Activated CD4-positive, alpha-beta T cell treated with anti-CD3 and anti-CD28 coated beads for 36 hours (primary cell): ENCODE measurements at regions of chr9 and their contacts with region 1.

Region 1: DNA sequence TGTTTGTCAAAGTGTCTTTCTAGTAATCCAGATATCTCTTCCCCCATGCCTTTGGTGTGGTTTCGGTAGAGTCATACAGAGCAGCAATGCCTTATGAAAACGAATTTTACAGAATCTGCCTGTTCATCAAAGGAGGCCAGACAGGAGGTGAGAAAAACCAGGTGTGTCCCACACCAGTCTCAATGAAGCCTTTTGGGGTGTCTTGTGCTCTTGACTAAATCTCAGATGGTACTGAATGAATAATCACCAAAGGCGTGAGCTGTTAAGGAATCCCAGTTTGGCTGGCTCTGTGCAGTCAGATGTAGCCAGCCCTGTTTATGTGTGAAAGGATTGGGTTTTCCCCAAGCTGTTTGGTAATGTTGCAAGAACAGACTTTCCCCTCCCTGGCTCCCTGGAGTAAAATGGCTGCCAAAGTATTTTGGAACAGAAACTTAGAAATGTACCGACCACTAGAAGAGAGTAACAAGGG is 70.8 kb upstream of the CDKN2B start:
- DNase-seq: peak; percentile 75
- ATAC-seq: peak; percentile 99
- H3K4me3 Mint-ChIP-seq: no peak overlapping the region
- H3K27ac Mint-ChIP-seq: no peak overlapping the region
- H3K4me1 Mint-ChIP-seq: peaks cover 26% of the 10 kb centered on the region
- H3K27me3 Mint-ChIP-seq: peaks cover 61% of the 10 kb centered on the region

Region 2: DNA sequence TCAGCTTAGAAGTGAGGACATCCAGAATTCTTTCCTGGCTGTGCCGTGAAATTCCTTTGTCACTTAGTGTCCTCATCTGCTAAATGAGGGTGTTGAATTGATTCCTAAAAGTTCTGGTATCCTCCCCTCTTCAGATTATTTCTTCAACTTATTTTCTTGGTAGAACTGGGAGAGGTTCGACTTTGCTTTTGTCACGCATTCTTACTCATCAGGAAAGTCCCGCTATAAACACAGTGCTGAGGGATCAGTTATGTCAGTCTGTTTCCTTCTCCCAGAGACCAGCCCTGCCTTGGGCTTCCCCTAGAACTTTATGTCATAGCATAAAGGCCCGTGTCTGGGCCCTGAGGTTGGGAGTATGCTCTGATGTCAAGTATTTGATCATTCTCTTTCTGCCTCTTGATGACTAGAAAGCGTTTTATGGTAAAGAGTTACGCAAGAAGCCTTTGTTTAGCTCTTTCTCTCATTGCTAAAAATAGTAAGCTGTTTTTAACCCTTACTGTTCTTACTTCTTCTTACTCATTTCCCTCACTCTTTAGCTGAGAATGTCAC is 247.9 kb before region 1 on chr9:
- CTCF ChIA-PET with region 1: no interaction called
- POLR2A ChIA-PET with region 1: no interaction called
- intact Hi-C with region 1: loop called (anchors 1 to 5 kb)
- DNase-seq: peak; percentile 77
- ATAC-seq: peak; percentile 91
- H3K4me3 Mint-ChIP-seq: no peak overlapping the region
- H3K27ac Mint-ChIP-seq: peak overlapping the region; percentile 83
- H3K4me1 Mint-ChIP-seq: peaks cover 64% of the 10 kb centered on the region
- H3K27me3 Mint-ChIP-seq: no peaks in the 10 kb centered on the region

Region 3: GRCh38 chr9:21862871-21863270 is 217.0 kb before region 1 on chr9:
- CTCF ChIA-PET with region 1: no interaction called
- POLR2A ChIA-PET with region 1: no interaction called
- intact Hi-C with region 1: no loop called
- DNase-seq: no peak
- ATAC-seq: no peak
- H3K4me3 Mint-ChIP-seq: no peak overlapping the region
- H3K27ac Mint-ChIP-seq: no peak overlapping the region
- H3K4me1 Mint-ChIP-seq: peaks cover 5% of the 10 kb centered on the region
- H3K27me3 Mint-ChIP-seq: no peaks in the 10 kb centered on the region

Region 4: DNA sequence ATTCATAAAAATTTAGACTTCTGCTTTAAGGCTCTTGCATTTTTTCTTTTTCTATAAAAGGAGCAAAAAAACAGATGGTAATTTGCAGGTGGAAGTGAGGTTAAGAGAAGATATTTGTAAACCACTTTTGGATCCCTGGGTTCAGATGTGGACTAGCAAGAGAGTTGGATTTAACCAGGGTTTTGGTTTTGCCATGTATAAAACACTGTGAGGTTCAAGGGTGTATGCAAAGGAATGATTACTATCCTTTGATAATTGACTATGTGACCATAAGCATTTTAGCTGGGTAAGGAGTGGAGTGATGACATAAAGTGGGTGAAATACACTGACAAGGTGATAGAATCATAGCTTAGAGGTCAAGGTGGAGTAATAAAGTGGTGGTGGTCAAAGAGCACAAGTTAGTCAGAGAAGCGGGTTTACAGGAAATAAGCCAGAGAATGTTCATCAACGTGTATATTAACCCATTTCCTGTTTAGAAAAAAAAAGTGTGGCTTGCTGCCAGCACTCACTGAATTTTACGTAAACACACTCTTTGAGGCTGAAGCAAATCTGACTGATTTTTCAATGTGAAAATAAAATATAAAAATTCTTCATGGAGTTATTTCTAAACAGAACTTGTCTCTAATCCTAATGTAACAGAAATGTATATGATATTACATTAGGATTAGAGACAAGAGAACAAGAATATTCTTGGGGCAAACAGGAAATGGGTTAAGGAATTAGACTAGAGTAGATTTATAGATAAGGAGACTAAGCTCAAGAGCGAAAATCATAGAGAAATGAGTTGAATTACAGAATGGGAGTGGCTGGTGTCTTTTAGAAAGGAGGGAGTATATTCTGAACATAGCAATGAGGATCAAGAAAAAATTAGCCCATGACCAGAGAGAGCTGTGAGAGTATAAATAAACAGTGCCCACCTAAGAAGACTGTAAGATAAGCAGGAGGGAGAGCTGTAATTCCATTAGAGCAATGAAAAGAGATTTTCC is 160.2 kb before region 1 on chr9:
- CTCF ChIA-PET with region 1: no interaction called
- POLR2A ChIA-PET with region 1: no interaction called
- intact Hi-C with region 1: no loop called
- DNase-seq: peak; percentile 16
- ATAC-seq: peak; percentile 85
- H3K4me3 Mint-ChIP-seq: no peak overlapping the region
- H3K27ac Mint-ChIP-seq: peak overlapping the region; percentile 48
- H3K4me1 Mint-ChIP-seq: peaks cover 15% of the 10 kb centered on the region
- H3K27me3 Mint-ChIP-seq: no peaks in the 10 kb centered on the region

Region 5: GRCh38 chr9:22065431-22066200 is 14.3 kb before region 1 on chr9:
- CTCF ChIA-PET with region 1: no interaction called
- POLR2A ChIA-PET with region 1: no interaction called
- intact Hi-C with region 1: no loop called
- DNase-seq: no peak
- ATAC-seq: no peak
- H3K4me3 Mint-ChIP-seq: no peak overlapping the region
- H3K27ac Mint-ChIP-seq: no peak overlapping the region
- H3K4me1 Mint-ChIP-seq: peaks cover 12% of the 10 kb centered on the region
- H3K27me3 Mint-ChIP-seq: peaks cover 18% of the 10 kb centered on the region

Region 6: DNA sequence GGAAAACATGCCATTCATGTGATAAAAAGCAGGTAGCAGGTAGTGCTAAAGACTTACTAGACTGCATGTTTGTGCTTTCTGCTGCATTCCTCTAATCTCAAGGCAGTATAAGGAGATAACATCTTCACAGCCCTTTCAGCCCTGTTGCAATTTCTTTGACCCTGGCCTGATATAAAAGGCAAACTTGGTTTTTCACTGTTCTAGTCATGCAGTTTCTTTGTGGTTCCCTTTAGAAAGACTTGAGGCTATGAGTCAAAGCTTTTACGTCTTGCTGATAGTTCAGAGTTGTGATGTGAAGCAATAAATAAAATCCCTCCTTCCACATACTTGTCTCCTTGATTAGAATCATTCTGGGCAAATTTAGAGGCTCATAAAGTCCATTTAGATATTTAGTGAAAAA is 17.8 kb after region 1 on chr9:
- CTCF ChIA-PET with region 1: interaction called, 5 read pairs
- POLR2A ChIA-PET with region 1: no interaction called
- intact Hi-C with region 1: loop called (anchors 1 kb)
- DNase-seq: no peak
- ATAC-seq: peak; percentile 74
- H3K4me3 Mint-ChIP-seq: no peak overlapping the region
- H3K27ac Mint-ChIP-seq: no peak overlapping the region
- H3K4me1 Mint-ChIP-seq: peaks cover 4% of the 10 kb centered on the region
- H3K27me3 Mint-ChIP-seq: peaks cover 54% of the 10 kb centered on the region

Region 7: GRCh38 chr9:22147813-22148524 is 68.1 kb after region 1 on chr9:
- CTCF ChIA-PET with region 1: no interaction called
- POLR2A ChIA-PET with region 1: no interaction called
- intact Hi-C with region 1: loop called in 1 of 2 experiments (anchors 2 kb)
- DNase-seq: peak; percentile 18
- ATAC-seq: peak; percentile 97
- H3K4me3 Mint-ChIP-seq: no peak overlapping the region
- H3K27ac Mint-ChIP-seq: no peak overlapping the region
- H3K4me1 Mint-ChIP-seq: peaks cover 17% of the 10 kb centered on the region
- H3K27me3 Mint-ChIP-seq: peaks cover 32% of the 10 kb centered on the region

Region 8: DNA sequence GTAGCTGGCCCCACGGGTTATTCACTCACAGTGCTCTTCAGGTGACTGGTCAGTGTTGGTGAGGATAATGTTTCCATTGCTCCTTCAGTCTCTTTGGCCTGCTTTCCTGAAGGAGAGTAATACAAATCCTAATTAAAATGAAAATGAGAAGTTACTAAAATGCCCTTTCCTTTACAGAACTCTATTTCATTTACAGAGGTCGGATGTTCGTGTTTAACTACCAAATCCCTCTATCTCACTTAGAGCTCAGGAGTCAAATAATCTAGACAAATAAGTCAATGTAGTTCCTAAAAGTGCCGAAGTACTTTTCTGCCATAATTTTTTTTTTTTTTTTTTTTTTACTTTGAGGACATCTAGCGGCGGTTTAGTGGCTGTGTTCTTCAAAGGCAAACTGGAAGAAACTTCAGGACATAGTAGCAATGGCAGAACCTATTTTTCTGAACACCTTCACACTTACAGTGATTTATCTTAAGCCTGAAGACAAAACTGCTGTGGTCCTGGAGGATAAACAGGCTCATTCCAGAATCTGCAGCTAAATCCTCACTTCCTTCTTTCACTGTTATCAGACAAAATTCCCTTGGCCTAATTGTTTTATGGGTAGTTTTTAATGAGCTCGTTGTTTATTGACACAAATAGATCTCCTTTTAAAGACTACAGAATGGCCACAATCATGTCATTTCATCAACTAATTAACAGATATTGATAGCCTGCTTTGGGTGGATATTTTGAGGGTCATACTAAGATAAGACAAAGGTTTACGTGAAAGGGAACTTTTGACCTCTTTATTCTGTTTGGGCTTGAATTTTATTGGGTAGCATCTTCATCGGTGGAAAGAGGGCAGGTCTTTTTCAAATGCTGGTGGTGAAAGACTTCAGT is 159.1 kb after region 1 on chr9:
- CTCF ChIA-PET with region 1: interaction called, 3 read pairs
- POLR2A ChIA-PET with region 1: no interaction called
- intact Hi-C with region 1: loop called in 1 of 2 experiments (anchors 2 kb)
- DNase-seq: no peak
- ATAC-seq: peak; percentile 34
- H3K4me3 Mint-ChIP-seq: no peak overlapping the region
- H3K27ac Mint-ChIP-seq: no peak overlapping the region
- H3K4me1 Mint-ChIP-seq: peaks cover 37% of the 10 kb centered on the region
- H3K27me3 Mint-ChIP-seq: peaks cover 19% of the 10 kb centered on the region